Lower leg skin (tissue), 4 donors: ENCODE measurements at regions of chr2 and their contacts with region 1.

Region 1: DNA sequence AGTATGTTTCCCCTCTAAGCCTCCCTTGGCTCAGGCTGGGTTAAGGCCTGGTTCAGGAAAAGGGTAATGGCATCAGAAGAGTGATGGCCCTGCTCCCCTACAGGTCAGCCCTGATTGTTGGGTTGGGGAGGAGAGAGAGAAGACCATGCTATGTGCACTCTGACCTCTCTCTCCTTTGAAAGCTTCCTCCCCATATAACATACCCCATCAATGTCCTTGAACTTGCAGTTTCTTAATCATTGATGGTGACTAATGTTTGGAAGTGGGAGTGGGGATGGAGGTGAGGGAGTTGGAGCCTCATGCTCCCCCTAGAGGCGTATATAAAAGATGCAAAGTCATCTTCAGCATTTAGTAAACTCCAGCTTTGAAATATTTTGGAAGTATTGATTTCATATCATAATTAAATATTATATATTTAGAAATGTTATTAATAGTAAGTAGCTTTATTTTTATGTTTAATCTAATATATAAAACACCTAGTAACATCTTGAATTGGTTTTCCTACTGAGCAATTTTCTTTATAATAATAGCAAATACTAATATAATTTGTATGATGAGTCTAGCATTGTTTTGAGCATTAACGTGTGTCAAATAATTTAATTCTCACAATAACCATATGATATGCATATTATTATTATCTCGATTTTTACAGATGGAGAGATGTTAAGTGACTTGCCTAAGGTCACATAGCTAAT is 8.8 kb downstream of the PLCL1 start:
- DNase-seq: no peak
- H3K4me3 ChIP-seq: no peak overlapping the region
- CTCF ChIP-seq: no peak
- POLR2A ChIP-seq: no peak

Region 2: DNA sequence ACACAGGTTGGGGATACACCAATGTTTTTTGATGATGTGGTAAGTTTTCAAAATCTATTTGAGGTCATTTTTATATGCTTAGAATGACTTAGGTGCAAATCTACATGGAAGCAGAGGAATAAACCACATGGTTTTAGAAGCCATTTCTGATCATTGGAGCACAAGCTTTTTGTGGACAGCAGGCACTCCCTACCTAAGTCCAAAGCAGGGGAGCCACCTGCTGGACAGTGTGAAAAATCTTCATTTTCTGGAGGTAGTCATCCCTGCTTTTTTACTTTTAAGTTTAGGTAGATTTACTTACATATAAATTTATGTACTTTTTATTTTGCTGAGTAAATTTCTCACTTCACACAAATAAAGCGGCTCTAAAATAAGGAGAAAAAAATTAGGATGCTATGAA is 314.4 kb after region 1 on chr2:
- intact Hi-C with region 1: loop called (anchors 10 kb)
- DNase-seq: no peak
- H3K4me3 ChIP-seq: no peak overlapping the region
- CTCF ChIP-seq: no peak
- POLR2A ChIP-seq: no peak